Vagina (tissue), 2 donors: ENCODE measurements at regions of chr11 and their contacts with region 1.

Region 1: GRCh38 chr11:60906132-60906972 is at the start of gene PRPF19:
- DNase-seq: peak in 1 of 2 donors; percentile 96
- H3K4me3 ChIP-seq: peak within 1 kb of the TSS; percentile 77 to 99
- H3K27ac ChIP-seq: peak within 1 kb of the TSS; percentile 91
- H3K4me1 ChIP-seq: peaks cover 34% of the 10 kb centered on the region
- H3K27me3 ChIP-seq: no peaks in the 10 kb centered on the region
- CTCF ChIP-seq: no peak
- POLR2A ChIP-seq: peak in 1 of 2 donors; percentile 45
- total RNA-seq, gene PRPF19: 54.0 TPM

Region 2: DNA sequence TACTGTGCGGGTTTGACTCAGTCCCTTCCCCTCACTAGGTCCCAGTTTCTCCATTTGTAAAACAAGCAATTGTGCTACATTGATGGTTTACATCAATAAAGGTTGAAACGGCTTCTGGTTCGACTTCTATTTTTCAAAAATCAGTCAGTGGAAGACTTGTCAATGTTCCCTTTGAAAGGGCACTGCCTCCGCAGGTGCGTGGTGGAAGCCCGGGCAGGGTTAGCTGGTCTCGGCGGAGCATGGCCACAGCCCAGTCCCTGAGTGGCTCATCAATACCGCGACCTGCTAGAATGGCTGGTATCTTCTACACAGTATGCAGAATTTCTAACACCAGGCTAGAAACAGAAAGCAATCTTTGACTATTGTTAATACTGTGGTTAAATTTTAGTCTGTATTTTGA is 105.2 kb before region 1 on chr11:
- intact Hi-C with region 1: no loop called
- DNase-seq: no peak
- H3K4me3 ChIP-seq: no peak overlapping the region
- H3K27ac ChIP-seq: no peak overlapping the region
- H3K4me1 ChIP-seq: no peaks in the 10 kb centered on the region
- H3K27me3 ChIP-seq: no peaks in the 10 kb centered on the region
- CTCF ChIP-seq: no peak
- POLR2A ChIP-seq: no peak

Region 3: DNA sequence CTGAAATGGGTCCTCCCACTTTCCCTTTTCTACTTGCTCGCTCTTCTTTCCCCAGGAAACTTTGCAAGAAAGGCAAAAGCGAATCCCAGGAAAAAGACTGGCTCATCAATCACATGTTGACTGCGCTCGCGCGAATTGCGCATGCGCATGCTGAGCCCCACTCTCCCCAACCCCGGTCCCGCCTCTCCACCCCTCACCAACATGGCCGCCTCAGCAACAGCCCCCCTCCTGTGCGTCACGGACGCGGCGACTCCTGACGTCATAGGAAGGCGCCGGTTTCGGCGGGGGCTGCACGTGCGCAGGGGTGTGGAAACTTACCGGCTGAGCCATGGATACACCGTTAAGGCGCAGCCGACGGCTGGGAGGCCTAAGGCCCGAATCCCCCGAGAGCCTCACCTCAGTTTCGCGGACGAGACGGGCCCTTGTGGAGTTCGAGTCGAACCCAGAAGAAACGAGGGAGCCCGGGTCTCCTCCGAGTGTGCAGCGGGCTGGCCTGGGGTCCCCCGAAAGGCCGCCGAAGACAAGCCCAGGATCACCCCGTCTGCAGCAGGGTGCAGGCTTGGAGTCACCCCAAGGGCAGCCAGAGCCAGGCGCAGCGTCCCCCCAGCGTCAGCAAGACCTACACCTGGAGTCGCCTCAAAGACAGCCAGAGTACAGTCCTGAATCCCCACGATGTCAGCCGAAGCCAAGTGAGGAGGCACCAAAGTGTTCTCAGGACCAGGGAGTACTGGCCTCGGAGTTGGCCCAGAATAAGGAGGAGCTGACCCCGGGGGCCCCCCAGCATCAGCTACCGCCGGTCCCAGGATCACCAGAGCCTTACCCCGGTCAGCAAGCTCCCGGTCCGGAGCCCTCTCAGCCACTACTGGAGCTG is 64.3 kb before region 1 on chr11 and contains the start of gene CCDC86:
- intact Hi-C with region 1: loop called (anchors 5 kb)
- DNase-seq: peak in 1 of 2 donors; percentile 97
- H3K4me3 ChIP-seq: peak within 1 kb of the TSS; percentile 75 to 86
- H3K27ac ChIP-seq: peak within 1 kb of the TSS; percentile 67
- H3K4me1 ChIP-seq: peaks cover 38% of the 10 kb centered on the region
- H3K27me3 ChIP-seq: no peaks in the 10 kb centered on the region
- CTCF ChIP-seq: no peak
- POLR2A ChIP-seq: no peak
- total RNA-seq, gene CCDC86: 26.3 TPM

Region 4: DNA sequence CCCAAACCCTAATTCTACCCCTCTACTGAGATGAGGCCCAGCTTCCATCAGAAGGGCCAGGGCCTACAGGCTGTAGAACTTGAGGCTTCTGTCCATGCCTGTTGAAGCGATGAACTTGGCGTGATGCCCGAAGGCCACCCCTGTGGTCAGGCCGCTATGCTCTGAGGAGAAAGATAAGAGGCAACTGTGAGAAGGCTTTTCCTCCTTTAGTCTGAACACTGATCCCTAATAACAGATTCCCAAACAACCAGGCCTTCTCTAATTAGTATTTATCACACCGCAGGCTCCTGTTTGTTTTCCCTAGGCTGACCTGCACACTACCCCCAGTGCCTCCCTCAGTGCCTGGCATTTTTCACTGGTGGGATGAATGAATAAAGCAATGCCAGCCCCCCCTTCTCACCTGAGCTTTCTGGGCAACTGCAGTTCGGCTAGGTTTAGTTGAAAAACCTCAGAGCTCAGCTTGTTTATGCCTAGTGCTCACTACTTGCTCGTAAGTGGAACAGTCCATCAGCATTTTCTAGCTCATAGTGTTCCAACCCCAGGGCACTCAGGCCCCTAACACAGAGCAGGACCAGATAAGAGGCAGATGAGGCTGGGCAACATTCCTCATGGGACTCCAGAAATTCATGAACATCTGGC is 15.1 kb before region 1 on chr11:
- intact Hi-C with region 1: no loop called
- DNase-seq: no peak
- H3K4me3 ChIP-seq: no peak overlapping the region
- H3K27ac ChIP-seq: no peak overlapping the region
- H3K4me1 ChIP-seq: no peaks in the 10 kb centered on the region
- H3K27me3 ChIP-seq: no peaks in the 10 kb centered on the region
- CTCF ChIP-seq: no peak
- POLR2A ChIP-seq: no peak

Region 5: DNA sequence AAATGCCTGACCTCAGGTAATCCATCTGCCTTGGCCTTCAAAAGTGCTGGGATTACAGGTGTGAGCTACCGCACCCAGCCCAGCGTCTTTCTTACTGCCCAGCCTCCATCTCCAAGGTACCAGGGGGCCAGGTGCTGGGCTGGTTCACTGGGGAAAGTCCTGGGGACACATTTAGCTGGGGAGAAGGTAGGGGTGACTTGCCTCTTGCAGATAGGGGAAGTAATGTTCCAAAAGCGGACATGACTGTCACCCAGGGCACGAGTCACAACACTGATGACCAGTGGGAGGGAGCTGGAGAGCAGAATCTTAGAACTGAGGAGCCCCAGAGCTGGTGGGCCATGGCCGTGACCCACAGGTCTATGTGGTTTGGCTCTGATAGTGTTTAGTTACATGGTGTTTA is 48.0 kb after region 1 on chr11:
- intact Hi-C with region 1: no loop called
- DNase-seq: no peak
- H3K4me3 ChIP-seq: no peak overlapping the region
- H3K27ac ChIP-seq: no peak overlapping the region
- H3K4me1 ChIP-seq: peaks cover 26% of the 10 kb centered on the region
- H3K27me3 ChIP-seq: no peaks in the 10 kb centered on the region
- CTCF ChIP-seq: no peak
- POLR2A ChIP-seq: no peak

Region 6: GRCh38 chr11:62612366-62613290 is 1706.3 kb after region 1 on chr11 and contains the starts of genes EML3 and ROM1:
- intact Hi-C with region 1: loop called (anchors 10 kb)
- DNase-seq: no peak
- H3K4me3 ChIP-seq: peak within 1 kb of the TSS; percentile 83 to 96
- H3K27ac ChIP-seq: peak within 1 kb of the TSS; percentile 92
- H3K4me1 ChIP-seq: peaks cover 42% of the 10 kb centered on the region
- H3K27me3 ChIP-seq: no peaks in the 10 kb centered on the region
- CTCF ChIP-seq: peak; percentile 65 to 100 (median 79)
- POLR2A ChIP-seq: no peak
- total RNA-seq, gene EML3: 69.0 TPM
- total RNA-seq, gene ROM1: 6.1 TPM